ENCODE measurements at regions of chr16 and their contacts with region 1.

Region 1: GRCh38 chr16:57648590-57649442 is 19.3 kb upstream of the ADGRG3 start:
- DNase-seq: peak; percentile 95
- H3K4me3 ChIP-seq: peak overlapping the region in 2 of 8 donors; percentile 6 to 35
- H3K27ac ChIP-seq: peak overlapping the region in 6 of 8 donors; percentile 2 to 83 (median 50)
- H3K4me1 ChIP-seq: peaks cover 11 to 85% (median 33%) of the 10 kb centered on the region in 6 donors
- H3K27me3 ChIP-seq: peaks cover 0 to 16% (median 0%) of the 10 kb centered on the region in 7 donors
- CTCF ChIP-seq: peak; percentile 98 to 100 (median 100)
- POLR2A ChIP-seq: no peak

Region 2: DNA sequence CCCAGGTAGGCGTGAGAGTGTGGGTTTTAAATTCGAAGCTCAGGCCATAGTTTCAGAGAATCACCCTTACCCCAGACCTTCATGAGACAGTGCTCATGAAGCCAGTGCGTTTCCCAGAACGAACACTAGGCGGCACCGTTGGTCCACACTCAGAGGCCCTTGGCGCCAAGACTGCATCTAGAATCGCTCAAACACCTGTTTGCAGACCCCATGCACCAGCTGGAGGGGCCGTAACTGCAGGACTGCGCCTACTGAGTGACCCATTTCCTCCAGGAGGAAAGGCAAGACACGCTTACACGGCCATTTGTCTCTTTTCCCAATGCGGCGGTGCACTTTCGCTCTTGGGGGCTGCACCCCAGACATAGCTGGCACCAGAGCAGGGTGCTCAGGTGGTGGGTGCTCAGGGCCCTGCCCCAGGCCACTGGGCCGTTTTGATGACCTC is 72.4 kb before region 1 on chr16:
- intact Hi-C with region 1: loop called (anchors 5 kb)
- DNase-seq: peak; percentile 91
- H3K4me3 ChIP-seq: no peak overlapping the region
- H3K27ac ChIP-seq: peak overlapping the region in 3 of 8 donors; percentile 69 to 83 (median 76)
- H3K4me1 ChIP-seq: peaks cover 4 to 38% (median 25%) of the 10 kb centered on the region in 6 donors
- H3K27me3 ChIP-seq: peaks cover 0 to 10% (median 0%) of the 10 kb centered on the region in 7 donors
- CTCF ChIP-seq: peak; percentile 89 to 95 (median 92)
- POLR2A ChIP-seq: no peak

Region 3: DNA sequence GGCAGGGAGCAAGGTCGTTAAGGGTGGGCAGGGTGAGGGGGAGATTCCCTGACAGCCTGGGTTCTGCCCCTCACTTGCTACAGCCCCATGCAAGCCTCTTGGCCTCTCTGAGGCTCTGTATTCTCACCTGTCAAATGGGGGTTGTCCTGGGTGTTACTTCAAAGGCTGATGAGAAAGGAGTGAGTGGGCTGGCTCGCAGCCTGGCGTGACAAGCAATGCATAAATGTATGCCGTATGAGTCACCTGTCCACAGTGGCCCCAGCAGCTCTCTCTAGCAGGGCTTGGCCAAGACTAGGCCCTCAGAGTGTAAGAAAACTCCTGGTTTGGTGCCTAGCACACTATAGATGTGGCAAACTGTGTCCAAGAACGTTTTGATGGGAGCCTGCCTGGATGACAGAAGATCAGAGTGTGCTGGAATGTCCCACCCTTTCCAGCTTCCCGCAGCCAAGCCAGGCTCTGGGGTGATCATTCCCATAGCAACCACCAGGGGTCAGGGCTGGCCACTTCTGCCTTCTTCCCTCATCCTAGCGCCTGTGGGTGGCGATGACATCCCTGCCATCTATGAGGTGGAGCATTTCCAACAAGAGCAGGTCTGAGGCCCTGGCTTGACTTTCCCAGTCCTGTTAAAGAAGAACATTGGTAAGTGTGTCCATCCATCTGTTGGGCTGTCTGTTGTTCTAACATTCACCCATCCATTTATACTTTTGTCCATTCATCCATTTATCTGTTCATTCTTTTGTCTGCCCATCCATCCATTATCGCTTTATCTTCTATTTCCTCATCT is 57.5 kb before region 1 on chr16:
- intact Hi-C with region 1: loop called (anchors 5 kb)
- DNase-seq: peak; percentile 89
- H3K4me3 ChIP-seq: no peak overlapping the region
- H3K27ac ChIP-seq: peak overlapping the region in 4 of 8 donors; percentile 25 to 86 (median 72)
- H3K4me1 ChIP-seq: peaks cover 6 to 43% (median 24%) of the 10 kb centered on the region in 6 donors
- H3K27me3 ChIP-seq: peaks cover 0 to 14% (median 0%) of the 10 kb centered on the region in 7 donors
- CTCF ChIP-seq: peak; percentile 80 to 97 (median 88)
- POLR2A ChIP-seq: no peak